Activated CD4-positive, alpha-beta T cell treated with anti-CD3 and anti-CD28 coated beads, Interleukin-2, amount 10 ng/mL, durations not matched to agents 24 days and 14 days (primary cell): ENCODE measurements at regions of chr3 and their contacts with region 1.

Region 1: GRCh38 chr3:195613468-195614069 is 29.8 kb upstream of the APOD start:
- DNase-seq: no peak
- H3K4me3 Mint-ChIP-seq: no peak overlapping the region
- H3K27ac Mint-ChIP-seq: no peak overlapping the region
- H3K4me1 Mint-ChIP-seq: peaks cover 24% of the 10 kb centered on the region
- H3K27me3 Mint-ChIP-seq: peaks cover 3% of the 10 kb centered on the region

Region 2: DNA sequence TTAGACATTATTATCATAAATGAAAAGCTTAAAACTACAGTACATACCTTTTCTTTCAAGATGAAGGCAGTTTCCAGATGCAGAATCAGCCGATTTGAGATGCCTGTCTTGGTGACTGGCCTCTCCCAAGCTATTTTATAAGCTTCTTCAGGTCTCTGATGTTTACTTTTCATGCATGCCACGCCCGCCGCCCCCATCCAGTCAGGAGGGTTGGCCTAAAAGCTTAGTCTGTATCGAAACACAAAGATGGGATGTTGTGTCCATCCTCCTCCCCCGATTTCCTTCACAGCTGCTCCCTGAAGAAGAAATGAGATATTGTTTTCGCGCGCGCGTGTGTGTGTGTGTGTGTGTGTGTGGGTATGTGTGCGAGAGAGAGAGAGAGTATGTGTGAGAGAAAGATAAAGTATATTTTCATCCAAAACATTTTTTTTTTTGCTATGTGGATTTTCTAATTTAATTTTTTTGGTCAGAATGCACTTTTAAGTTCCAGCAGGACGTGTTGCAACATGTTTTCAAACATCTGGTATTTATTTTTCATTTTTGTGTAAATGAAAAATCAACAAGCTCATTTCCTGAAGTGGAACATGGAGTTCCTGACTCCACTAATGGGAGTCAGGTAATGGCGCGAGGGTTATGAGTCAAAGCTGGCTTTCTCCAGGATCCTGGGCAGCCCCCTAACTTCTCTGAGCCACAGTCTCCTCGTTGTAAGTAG is 29.6 kb before region 1 on chr3 and contains the start of gene APOD:
- intact Hi-C with region 1: loop called (anchors 2 kb)
- DNase-seq: no peak
- H3K4me3 Mint-ChIP-seq: no peak within 1 kb of the TSS
- H3K27ac Mint-ChIP-seq: peak within 1 kb of the TSS; percentile 50
- H3K4me1 Mint-ChIP-seq: peaks cover 16% of the 10 kb centered on the region
- H3K27me3 Mint-ChIP-seq: peaks cover 2% of the 10 kb centered on the region
- total RNA-seq, gene APOD: 1.8 and 2.6 TPM in 2 replicates

Region 3: DNA sequence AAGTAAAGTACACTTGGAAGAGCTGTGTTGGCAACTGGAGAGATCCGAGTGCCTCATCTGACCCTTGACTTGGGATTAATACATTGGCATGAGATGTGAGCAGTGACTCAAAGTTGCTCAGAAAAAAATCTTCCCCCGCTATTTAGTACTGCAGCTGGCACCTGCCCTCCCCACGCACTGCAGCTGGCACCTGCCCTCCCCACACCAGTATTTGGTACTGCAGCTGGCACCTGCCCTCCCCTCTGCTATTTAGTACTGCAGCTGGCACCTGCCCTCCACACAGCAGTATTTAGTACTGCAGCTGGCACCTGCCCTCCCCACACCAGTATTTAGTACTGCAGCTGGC is 103.3 kb after region 1 on chr3:
- intact Hi-C with region 1: loop called (anchors 2 kb)
- DNase-seq: no peak
- H3K4me3 Mint-ChIP-seq: no peak overlapping the region
- H3K27ac Mint-ChIP-seq: peak overlapping the region; percentile 3
- H3K4me1 Mint-ChIP-seq: peaks cover 5% of the 10 kb centered on the region
- H3K27me3 Mint-ChIP-seq: peaks cover 3% of the 10 kb centered on the region

Region 4: DNA sequence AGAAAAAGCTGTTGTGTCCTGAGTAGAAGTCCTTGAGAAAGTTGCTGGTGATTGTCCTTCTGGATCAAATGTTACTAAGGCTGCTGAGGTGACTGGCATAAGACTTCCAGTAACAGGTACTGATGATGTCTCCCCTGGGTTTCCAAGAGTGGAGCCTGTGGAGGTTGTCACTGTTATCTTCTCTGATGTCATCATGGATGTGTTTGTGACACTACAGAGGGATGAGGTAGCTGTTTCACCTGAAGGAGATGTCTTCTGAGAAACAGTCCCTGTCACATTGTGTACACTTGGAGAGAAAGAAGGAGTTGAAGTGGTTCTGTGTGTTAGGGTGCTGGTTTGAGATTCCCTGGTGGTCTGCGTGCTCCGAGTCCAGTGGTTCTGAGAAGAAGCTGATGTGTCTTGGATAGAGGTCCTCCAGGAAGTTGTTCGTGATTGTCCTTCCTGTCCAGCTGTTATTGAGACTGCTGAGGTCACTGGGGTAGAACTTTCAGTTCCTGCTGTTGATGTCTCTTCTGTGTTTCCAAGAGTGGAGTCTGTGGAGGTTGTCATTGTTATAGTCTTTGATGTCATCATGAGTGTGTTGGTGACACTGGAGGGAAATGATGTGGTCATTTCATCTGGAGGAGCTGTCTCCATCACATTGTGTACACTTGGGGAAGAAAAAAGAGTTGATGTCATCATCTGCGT is 177.2 kb after region 1 on chr3:
- intact Hi-C with region 1: no loop called
- DNase-seq: no peak
- H3K4me3 Mint-ChIP-seq: no peak overlapping the region
- H3K27ac Mint-ChIP-seq: no peak overlapping the region
- H3K4me1 Mint-ChIP-seq: peaks cover 24% of the 10 kb centered on the region
- H3K27me3 Mint-ChIP-seq: peaks cover 10% of the 10 kb centered on the region